PC-3 (cell line): ENCODE measurements at regions of chr20 and their contacts with region 1.

Region 1: DNA sequence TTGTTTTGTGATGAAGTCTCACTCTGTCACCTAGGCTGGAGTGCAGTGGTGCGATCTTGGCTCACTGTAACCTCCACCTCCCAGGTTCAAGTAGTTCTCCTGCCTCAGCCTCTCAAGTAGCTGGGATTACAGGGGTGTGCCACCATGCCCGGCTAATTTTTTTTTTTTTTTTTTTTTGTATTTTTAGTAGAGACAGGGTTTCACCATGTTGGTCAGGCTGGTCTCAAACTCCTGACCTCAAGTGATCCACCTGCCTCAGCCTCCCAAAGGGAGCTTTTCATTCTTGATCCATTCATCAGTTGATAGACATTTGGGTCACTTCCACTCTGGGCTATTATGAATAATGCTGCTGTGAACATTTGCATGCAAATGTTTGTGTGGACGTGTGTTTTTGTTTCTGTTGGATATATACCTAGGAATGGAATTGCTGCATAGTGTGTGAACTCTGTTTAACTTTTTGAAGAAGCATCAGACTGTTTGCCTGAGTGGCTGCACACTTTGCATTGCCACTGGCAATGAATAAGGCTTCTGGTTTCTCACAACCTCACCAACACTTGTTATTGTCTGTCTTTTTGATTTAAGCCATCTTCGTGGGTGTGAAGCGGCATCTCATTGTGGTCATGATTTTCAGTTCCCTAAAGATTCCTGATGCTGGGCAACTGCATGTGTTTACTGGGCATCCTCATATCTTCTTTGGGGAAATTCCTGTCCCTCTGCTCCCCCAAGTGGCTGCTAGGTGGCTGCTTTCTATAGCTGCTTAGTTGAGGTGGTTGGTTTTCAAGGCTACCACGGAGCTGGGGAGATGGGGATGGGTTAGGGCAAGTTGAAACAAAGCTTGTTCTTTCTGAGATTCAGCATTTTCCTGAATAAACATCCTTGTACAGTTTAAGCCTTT is 403.6 kb upstream of the SULF2 start:
- DNase-seq: peak; percentile 63
- ATAC-seq: peak; percentile 93
- H3K4me3 ChIP-seq: no peak overlapping the region
- H3K27ac ChIP-seq: no peak overlapping the region
- H3K4me1 ChIP-seq: 0 out of 2 replicates have a peak, but pooled peaks cover 7% of the 10 kb centered on the region
- H3K27me3 ChIP-seq: no peaks in the 10 kb centered on the region
- CTCF ChIP-seq: peak; percentile 90

Region 2: DNA sequence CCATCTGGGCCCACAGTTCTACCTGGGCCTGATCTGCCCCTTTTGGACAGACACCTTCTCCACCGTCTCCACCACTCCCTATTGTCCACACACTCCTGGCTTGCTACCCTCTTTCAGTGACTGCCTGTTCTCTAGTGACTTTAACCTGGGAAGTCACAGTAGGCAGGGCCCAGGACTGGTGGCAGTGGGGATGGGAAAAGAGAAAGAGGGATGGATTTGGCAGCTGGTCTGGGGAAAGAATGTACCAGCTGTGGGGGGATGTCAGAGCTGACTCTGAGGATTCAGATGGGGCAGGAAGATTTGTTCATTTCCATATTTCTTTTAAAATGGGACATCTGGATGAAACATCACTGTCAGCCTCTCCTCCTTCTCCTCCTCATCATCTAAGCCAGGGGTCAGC is 489.1 kb before region 1 on chr20:
- CTCF ChIA-PET with region 1: no interaction called
- POLR2A ChIA-PET with region 1: no interaction called
- intact Hi-C with region 1: no loop called
- DNase-seq: no peak
- ATAC-seq: no peak
- H3K4me3 ChIP-seq: no peak overlapping the region
- H3K27ac ChIP-seq: no peak overlapping the region
- H3K4me1 ChIP-seq: no peaks in the 10 kb centered on the region
- H3K27me3 ChIP-seq: no peaks in the 10 kb centered on the region
- CTCF ChIP-seq: no peak

Region 3: GRCh38 chr20:47929363-47930123 is 259.4 kb before region 1 on chr20:
- CTCF ChIA-PET with region 1: no interaction called
- POLR2A ChIA-PET with region 1: no interaction called
- intact Hi-C with region 1: loop called (anchors 10 kb)
- DNase-seq: peak; percentile 92
- ATAC-seq: peak; percentile 64
- H3K4me3 ChIP-seq: no peak overlapping the region
- H3K27ac ChIP-seq: peak overlapping the region; percentile 93
- H3K4me1 ChIP-seq: peaks cover 64% of the 10 kb centered on the region
- H3K27me3 ChIP-seq: no peaks in the 10 kb centered on the region
- CTCF ChIP-seq: no peak

Region 4: GRCh38 chr20:48012197-48013085 is 176.5 kb before region 1 on chr20:
- CTCF ChIA-PET with region 1: no interaction called
- POLR2A ChIA-PET with region 1: no interaction called
- intact Hi-C with region 1: loop called (anchors 10 kb)
- DNase-seq: peak; percentile 98
- ATAC-seq: peak; percentile 88
- H3K4me3 ChIP-seq: no peak overlapping the region
- H3K27ac ChIP-seq: peak overlapping the region; percentile 84
- H3K4me1 ChIP-seq: peaks cover 34% of the 10 kb centered on the region
- H3K27me3 ChIP-seq: no peaks in the 10 kb centered on the region
- CTCF ChIP-seq: peak; percentile 84

Region 5: DNA sequence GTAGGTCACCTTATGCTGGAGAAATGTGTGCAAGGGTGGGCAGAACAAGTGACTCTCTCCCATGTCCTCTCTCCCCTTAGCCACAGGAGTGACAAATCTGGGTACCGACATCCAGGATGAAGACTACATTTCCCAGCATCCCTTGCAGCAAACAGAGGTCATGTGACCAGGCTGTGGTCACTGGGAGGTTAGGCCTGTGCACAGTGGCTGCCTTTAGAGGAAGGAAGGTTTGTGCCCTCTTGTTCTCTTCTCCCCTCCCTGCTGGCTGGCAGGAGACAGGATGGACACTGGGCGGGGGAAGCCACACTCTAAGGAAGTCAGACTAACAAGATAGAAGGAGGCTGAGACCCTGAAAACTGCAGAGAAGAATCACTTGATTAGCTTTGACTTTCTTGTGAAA is 278.7 kb after region 1 on chr20:
- CTCF ChIA-PET with region 1: no interaction called
- POLR2A ChIA-PET with region 1: no interaction called
- intact Hi-C with region 1: no loop called
- DNase-seq: no peak
- ATAC-seq: no peak
- H3K4me3 ChIP-seq: no peak overlapping the region
- H3K27ac ChIP-seq: no peak overlapping the region
- H3K4me1 ChIP-seq: no peaks in the 10 kb centered on the region
- H3K27me3 ChIP-seq: peaks cover 81% of the 10 kb centered on the region
- CTCF ChIP-seq: no peak